ENCODE measurements at regions of chr1 and their contacts with region 1.

Region 1: DNA sequence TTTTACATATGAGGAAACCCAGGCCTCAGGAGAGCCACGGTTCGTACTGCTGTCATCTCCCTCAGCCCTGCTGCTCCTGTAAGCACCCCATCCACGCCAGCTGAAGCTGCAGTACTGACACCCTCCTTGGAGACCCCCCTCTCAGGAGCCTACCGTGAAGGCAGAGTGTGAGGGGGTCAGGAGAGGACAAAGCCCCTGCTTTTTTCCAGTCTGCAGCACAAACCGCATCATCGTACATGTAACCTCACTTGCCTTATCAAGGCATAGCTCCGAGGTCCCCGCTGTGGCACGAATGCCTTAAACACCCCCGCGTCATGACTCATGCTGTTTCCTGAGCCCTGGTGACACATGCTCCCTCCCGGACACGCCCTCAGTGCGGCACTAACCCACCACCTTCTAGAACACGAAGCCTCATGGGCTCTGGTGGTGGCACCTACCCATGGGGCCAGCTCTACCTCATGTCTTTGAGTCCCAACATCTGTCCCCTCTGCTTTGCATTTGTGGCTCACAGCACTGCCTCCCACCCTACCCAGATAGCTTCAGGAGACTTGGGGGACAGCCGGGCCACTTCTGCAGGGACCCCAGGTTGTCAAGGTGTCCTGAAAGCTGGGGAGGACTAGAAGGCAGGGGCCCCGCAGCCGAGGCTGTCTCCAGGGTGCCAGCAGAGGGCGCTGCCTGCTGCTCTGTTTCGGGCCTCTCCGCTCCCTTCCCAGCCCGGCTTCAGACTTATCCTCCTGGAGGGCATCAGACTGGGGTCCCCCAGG is 4.9 kb downstream of the SH3BGRL3 start:
- DNase-seq: peak; percentile 91 to 99 (median 92)
- H3K4me3 ChIP-seq: peak overlapping the region; percentile 38 to 50
- H3K4me3 Mint-ChIP-seq: peak overlapping the region; percentile 82 to 94 (median 89)
- H3K27ac ChIP-seq: peak overlapping the region; percentile 91
- H3K27ac Mint-ChIP-seq: peak overlapping the region; percentile 94 to 100 (median 99)
- H3K4me1 ChIP-seq: peaks cover 95% of the 10 kb centered on the region
- H3K4me1 Mint-ChIP-seq: peaks cover 63 to 96% (median 81%) of the 10 kb centered on the region in 4 donors
- H3K27me3 ChIP-seq: no peaks in the 10 kb centered on the region
- H3K27me3 Mint-ChIP-seq: no peaks in the 10 kb centered on the region

Region 2: GRCh38 chr1:26225033-26225831 is 59.5 kb before region 1 on chr1:
- CTCF ChIA-PET with region 1: no interaction called
- POLR2A ChIA-PET with region 1: no interaction called
- intact Hi-C with region 1: no loop called
- DNase-seq: peak; percentile 14 to 53 (median 16)
- H3K4me3 ChIP-seq: peak overlapping the region in 1 of 2 donors; percentile 27
- H3K4me3 Mint-ChIP-seq: peak overlapping the region; percentile 5 to 85 (median 65)
- H3K27ac ChIP-seq: no peak overlapping the region
- H3K27ac Mint-ChIP-seq: peak overlapping the region in 3 of 7 donors; percentile 18 to 82 (median 78)
- H3K4me1 ChIP-seq: peaks cover 6% of the 10 kb centered on the region
- H3K4me1 Mint-ChIP-seq: peaks cover 5 to 8% (median 6%) of the 10 kb centered on the region in 4 donors
- H3K27me3 ChIP-seq: no peaks in the 10 kb centered on the region
- H3K27me3 Mint-ChIP-seq: peaks cover 15 to 21% of the 10 kb centered on the region in 2 donors

Region 3: GRCh38 chr1:26300586-26301275 is 16.0 kb after region 1 on chr1:
- CTCF ChIA-PET with region 1: interaction called, 1,027 read pairs
- POLR2A ChIA-PET with region 1: interaction called, 3,358 read pairs
- intact Hi-C with region 1: no loop called
- DNase-seq: no peak
- H3K4me3 ChIP-seq: no peak overlapping the region
- H3K4me3 Mint-ChIP-seq: no peak overlapping the region
- H3K27ac ChIP-seq: no peak overlapping the region
- H3K27ac Mint-ChIP-seq: peak overlapping the region in 3 of 7 donors; percentile 22 to 73 (median 48)
- H3K4me1 ChIP-seq: peaks cover 6% of the 10 kb centered on the region
- H3K4me1 Mint-ChIP-seq: peaks cover 4 to 22% (median 11%) of the 10 kb centered on the region in 4 donors
- H3K27me3 ChIP-seq: no peaks in the 10 kb centered on the region
- H3K27me3 Mint-ChIP-seq: no peaks in the 10 kb centered on the region

Region 4: GRCh38 chr1:26306290-26307229 is 21.8 kb after region 1 on chr1 and contains the start of gene UBXN11:
- CTCF ChIA-PET with region 1: interaction called, 1,027 read pairs
- POLR2A ChIA-PET with region 1: interaction called, 3,358 read pairs
- intact Hi-C with region 1: loop called (anchors 1 kb)
- DNase-seq: peak; percentile 90 to 97 (median 91)
- H3K4me3 ChIP-seq: peak within 1 kb of the TSS; percentile 69 to 86
- H3K4me3 Mint-ChIP-seq: peak within 1 kb of the TSS; percentile 95 to 99 (median 98)
- H3K27ac ChIP-seq: peak within 1 kb of the TSS; percentile 74
- H3K27ac Mint-ChIP-seq: peak within 1 kb of the TSS; percentile 92 to 99 (median 98)
- H3K4me1 ChIP-seq: peaks cover 42% of the 10 kb centered on the region
- H3K4me1 Mint-ChIP-seq: peaks cover 25 to 40% (median 33%) of the 10 kb centered on the region in 4 donors
- H3K27me3 ChIP-seq: no peaks in the 10 kb centered on the region
- H3K27me3 Mint-ChIP-seq: no peaks in the 10 kb centered on the region
- total RNA-seq, gene UBXN11: 115 to 117 TPM

Region 5: GRCh38 chr1:26358411-26359384 is 73.9 kb after region 1 on chr1:
- CTCF ChIA-PET with region 1: interaction called, 307 read pairs
- POLR2A ChIA-PET with region 1: interaction called, 61 read pairs
- intact Hi-C with region 1: loop called (anchors 1 kb)
- DNase-seq: peak; percentile 79 to 95 (median 81)
- H3K4me3 ChIP-seq: peak overlapping the region in 1 of 2 donors; percentile 44
- H3K4me3 Mint-ChIP-seq: peak overlapping the region; percentile 58 to 88 (median 74)
- H3K27ac ChIP-seq: peak overlapping the region; percentile 40
- H3K27ac Mint-ChIP-seq: peak overlapping the region; percentile 79 to 97 (median 94)
- H3K4me1 ChIP-seq: peaks cover 56% of the 10 kb centered on the region
- H3K4me1 Mint-ChIP-seq: peaks cover 27 to 70% (median 41%) of the 10 kb centered on the region in 4 donors
- H3K27me3 ChIP-seq: no peaks in the 10 kb centered on the region
- H3K27me3 Mint-ChIP-seq: no peaks in the 10 kb centered on the region

Measured in CD4-positive, alpha-beta memory T cell (primary cell).